ENCODE measurements at regions of chr9 and their contacts with region 1.

Region 1: DNA sequence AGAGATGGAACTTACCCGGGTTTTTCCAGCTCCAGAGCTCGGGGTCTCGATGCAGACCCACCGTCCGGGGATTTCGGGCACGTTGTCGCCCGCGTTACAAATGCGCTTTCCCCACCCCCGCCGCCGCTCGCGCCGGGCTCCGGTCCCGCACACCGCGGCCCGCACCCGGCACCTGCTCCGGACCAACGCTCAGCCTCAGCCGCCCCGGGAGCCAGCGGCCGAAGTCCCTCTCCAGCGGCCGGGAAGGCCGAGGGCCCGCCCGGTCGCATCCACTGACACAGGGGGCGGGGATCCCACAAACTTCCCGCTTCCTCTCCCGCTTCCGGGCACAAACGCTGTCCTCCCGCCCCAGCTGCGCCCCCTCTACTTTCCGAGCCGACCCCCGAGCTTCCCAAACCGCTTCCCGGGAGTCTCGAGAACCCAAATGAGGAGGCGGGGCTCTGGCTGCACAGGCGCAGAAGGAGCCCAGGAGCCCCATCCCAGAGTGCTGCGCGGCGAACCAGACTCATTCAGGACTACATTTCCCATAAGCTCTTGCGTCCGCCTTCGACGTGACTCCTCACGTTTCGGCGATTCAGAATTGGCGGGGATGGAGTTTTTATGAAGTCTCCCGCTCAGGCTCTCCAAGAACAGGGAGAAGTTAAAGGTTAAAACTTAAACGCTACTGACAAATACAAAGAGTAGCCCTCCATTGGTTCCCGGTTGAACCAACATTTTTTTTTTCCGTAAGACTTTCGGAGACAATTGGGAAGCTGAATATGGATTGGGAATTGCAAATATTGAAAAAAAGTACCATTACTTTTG is at the start of gene ZNF782:
- DNase-seq: peak; percentile 93 to 95 (median 94)
- ATAC-seq: peak; percentile 96 to 99 (median 99)
- H3K4me3 ChIP-seq: peak within 1 kb of the TSS; percentile 58 to 94 (median 78)
- H3K27ac ChIP-seq: peak within 1 kb of the TSS; percentile 14 to 90 (median 81)
- H3K4me1 ChIP-seq: peaks cover 0 to 30% (median 15%) of the 10 kb centered on the region in 12 donors
- H3K27me3 ChIP-seq: no peaks in the 10 kb centered on the region
- CTCF ChIP-seq: no peak
- POLR2A ChIP-seq: peak in 1 of 2 donors; percentile 76
- total RNA-seq, gene ZNF782: 2.3 to 4.4 (median 2.9) TPM

Region 2: GRCh38 chr9:97109194-97109811 is 255.0 kb after region 1 on chr9:
- intact Hi-C with region 1: loop called in 9 of 10 experiments (anchors 2 to 5 kb)
- DNase-seq: peak in 2 of 5 donors; percentile 25 to 47
- ATAC-seq: peak in 2 of 4 donors; percentile 58 to 61
- H3K4me3 ChIP-seq: no peak overlapping the region
- H3K27ac ChIP-seq: no peak overlapping the region
- H3K4me1 ChIP-seq: no peaks in the 10 kb centered on the region
- H3K27me3 ChIP-seq: peaks cover 0 to 5% (median 0%) of the 10 kb centered on the region in 9 donors
- CTCF ChIP-seq: peak; percentile 18 to 61 (median 44)
- POLR2A ChIP-seq: no peak

Region 3: GRCh38 chr9:97237951-97238851 is 383.9 kb after region 1 on chr9:
- intact Hi-C with region 1: loop called in 1 of 10 experiments (anchors 5 kb)
- DNase-seq: peak; percentile 84 to 92 (median 87)
- ATAC-seq: peak; percentile 96 to 99 (median 99)
- H3K4me3 ChIP-seq: peak overlapping the region; percentile 42 to 82 (median 73)
- H3K27ac ChIP-seq: peak overlapping the region; percentile 11 to 82 (median 78)
- H3K4me1 ChIP-seq: peaks cover 0 to 19% (median 8%) of the 10 kb centered on the region in 12 donors
- H3K27me3 ChIP-seq: no peaks in the 10 kb centered on the region
- CTCF ChIP-seq: peak in 1 of 12 donors; percentile 17
- POLR2A ChIP-seq: peak in 1 of 2 donors; percentile 29

Region 4: DNA sequence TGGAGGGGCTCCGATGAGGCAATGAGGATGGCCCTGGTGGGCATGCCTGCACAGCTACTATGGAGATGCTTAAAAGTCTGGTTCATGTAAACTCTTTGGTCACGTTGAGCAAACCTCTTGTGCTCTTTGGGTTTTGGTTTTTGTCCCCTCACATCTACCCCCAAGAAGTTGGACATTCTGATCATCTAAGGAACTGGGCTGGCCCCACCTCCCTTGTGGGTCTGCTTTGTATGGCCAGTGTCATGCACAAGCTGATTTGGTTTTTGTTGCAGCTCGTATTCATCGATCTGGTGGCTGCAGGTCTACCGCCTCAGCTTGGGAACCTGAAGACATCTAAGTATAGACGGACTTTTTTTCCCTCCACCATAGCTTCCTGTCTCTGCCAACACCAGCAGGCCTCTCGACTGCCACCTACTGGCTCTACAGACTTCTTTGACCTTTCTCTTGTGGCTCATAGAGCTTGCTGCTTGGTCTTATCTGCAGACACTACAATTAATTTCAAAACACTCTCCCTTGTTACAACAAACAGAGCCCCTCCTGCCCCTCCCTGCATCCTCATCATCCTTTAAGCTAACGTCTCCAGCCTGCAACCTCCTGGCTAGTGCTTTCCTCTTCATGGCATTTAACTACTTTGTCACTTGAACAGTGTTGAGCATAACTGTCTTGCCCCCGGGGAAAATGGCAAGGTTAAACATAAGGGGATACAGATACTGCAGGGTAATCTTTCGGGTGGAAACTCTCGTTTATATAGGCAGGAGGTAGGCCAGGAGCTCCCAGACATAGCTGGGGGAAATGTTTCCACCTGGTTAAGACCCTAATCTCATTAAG is 744.4 kb after region 1 on chr9:
- intact Hi-C with region 1: loop called in 1 of 10 experiments (anchors 5 kb)
- DNase-seq: peak in 4 of 5 donors; percentile 77 to 86 (median 79)
- ATAC-seq: peak; percentile 45 to 74 (median 66)
- H3K4me3 ChIP-seq: no peak overlapping the region
- H3K27ac ChIP-seq: peak overlapping the region in 6 of 12 donors; percentile 16 to 53 (median 25)
- H3K4me1 ChIP-seq: peaks cover 0 to 79% (median 29%) of the 10 kb centered on the region in 12 donors
- H3K27me3 ChIP-seq: no peaks in the 10 kb centered on the region
- CTCF ChIP-seq: peak; percentile 81 to 89 (median 86)
- POLR2A ChIP-seq: no peak

Measured in heart left ventricle (tissue), 16 donors.